Cardiac septum (tissue), 1 donor: ENCODE measurements at regions of chr9 and their contacts with region 1.

Region 1: GRCh38 chr9:2570615-2571479 is 50.7 kb upstream of the VLDLR start:
- DNase-seq: peak; percentile 93

Region 2: DNA sequence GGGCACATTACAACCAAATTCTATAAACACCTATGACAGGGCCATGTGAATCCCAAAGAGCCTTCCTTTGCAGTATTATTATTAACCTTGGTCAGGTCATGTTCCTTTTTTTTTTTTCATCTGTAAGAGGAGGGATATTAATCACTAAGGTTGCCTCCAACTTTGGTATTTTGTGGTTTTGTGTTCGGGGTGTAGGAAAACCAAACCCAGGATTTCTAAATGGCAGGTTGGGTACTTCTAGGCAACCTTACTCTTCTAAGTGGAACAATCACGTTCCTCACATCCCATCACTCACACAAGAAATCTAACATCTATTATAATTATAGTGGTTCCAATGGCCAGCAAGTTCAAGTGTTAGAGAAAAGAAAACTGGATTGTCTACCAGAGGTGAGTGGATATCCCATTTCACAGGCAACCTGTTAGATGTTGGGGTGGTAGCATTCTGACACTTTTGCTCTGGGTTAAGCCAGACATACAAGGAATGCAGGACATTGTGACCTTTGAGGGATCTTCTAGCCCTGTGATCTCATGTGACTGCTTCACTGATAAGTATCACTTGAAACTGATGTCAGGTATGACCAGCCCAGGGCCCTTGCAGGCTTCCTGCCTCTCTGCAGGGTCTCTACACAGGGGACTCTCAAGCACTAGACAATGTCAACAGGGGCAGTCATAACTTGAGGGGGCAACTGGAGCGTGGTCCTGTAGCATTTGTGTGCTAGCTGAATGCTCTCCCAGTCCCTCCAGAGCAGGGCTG is 75.4 kb before region 1 on chr9:
- intact Hi-C with region 1: loop called (anchors 2 kb)
- DNase-seq: no peak

Region 3: GRCh38 chr9:2559212-2560152 is 11.4 kb before region 1 on chr9:
- intact Hi-C with region 1: loop called (anchors 1 kb)
- DNase-seq: peak; percentile 89

Region 4: DNA sequence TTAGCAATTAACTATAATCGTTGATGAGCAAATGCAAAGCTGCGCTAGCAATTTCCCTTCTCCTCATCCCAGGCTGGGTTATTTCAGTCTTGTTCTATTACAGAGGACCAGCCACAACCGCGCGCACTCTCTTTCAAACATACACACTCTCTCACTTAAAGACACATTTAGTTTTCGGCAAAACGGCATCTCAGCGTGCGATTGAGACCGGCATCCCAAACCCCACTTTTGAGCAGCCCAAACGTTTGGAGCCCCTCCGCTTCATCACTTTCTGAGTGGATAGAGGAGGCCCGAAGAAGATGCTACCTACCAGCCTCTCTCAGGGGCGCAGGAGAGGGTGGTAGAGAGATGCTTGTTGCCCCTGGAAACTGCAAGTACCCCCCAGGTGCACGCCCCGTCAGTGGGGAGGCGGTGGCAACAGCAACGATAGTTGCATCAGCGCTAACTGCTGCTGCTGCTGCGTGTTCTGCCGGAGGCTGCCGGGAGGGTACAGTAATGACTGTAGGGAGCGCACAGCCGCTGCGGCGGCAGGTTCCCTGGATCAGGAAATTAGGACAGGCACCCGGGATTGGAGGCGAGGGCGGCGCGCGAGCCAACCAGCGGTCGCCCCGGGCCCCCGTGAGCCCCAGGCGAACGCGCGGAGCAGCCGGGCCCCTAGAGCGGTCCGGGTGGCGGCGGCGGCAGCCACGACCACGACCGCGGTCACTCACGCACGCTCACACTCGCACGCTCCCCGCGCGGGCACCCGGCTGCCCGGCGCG is 50.3 kb after region 1 on chr9:
- intact Hi-C with region 1: loop called (anchors 2 kb)
- DNase-seq: peak; percentile 85

Region 5: GRCh38 chr9:2816476-2817141 is 245.8 kb after region 1 on chr9:
- intact Hi-C with region 1: loop called (anchors 2 kb)
- DNase-seq: no peak

Region 6: GRCh38 chr9:3008091-3008490 is 437.2 kb after region 1 on chr9:
- intact Hi-C with region 1: no loop called
- DNase-seq: no peak